Ovary (tissue), 10 donors: ENCODE measurements at regions of chr2 and their contacts with region 1.

Region 1: GRCh38 chr2:43219383-43220228 is 6.8 kb downstream of the ZFP36L2 start:
- DNase-seq: peak; percentile 80 to 88 (median 84)
- H3K4me3 ChIP-seq: peak overlapping the region; percentile 35
- H3K27ac ChIP-seq: peak overlapping the region; percentile 73 to 90
- H3K4me1 ChIP-seq: peaks cover 27% of the 10 kb centered on the region
- H3K27me3 ChIP-seq: no peaks in the 10 kb centered on the region
- CTCF ChIP-seq: no peak
- EP300 ChIP-seq: no peak
- POLR2A ChIP-seq: peak; percentile 31

Region 2: GRCh38 chr2:42964439-42965083 is 255.0 kb before region 1 on chr2:
- intact Hi-C with region 1: loop called in 1 of 4 experiments (anchors 5 kb)
- DNase-seq: peak; percentile 71 to 80 (median 78)
- H3K4me3 ChIP-seq: no peak overlapping the region
- H3K27ac ChIP-seq: peak overlapping the region in 1 of 2 donors; percentile 94
- H3K4me1 ChIP-seq: peaks cover 51% of the 10 kb centered on the region
- H3K27me3 ChIP-seq: no peaks in the 10 kb centered on the region
- CTCF ChIP-seq: no peak
- EP300 ChIP-seq: no peak
- POLR2A ChIP-seq: no peak

Region 3: DNA sequence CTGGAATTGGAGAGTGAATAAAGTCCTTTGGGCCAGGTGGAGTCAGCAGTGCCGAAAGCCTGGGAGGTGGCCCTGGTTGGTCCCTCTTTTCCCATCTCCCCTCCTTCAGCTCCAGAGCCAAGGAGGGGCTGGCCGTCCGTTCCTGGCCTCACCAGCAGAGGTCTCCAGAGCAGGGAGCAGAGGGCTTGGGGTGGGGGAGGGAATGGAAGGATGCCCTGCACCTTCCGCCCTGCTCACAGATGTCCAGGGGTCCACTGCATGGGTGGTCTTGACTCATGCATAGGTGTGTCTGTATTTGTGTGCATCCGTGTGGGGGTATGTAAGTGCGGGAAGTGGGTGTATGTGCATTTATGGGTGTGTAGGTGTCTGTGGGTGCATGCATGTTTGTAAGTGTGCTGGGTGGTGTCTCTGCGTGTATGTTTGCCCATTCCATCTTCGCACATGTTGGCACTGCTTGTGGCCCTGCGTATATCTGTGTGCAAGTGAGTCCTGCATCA is 195.0 kb before region 1 on chr2:
- intact Hi-C with region 1: loop called in 3 of 4 experiments (anchors 5 kb)
- DNase-seq: peak; percentile 70 to 82 (median 80)
- H3K4me3 ChIP-seq: no peak overlapping the region
- H3K27ac ChIP-seq: peak overlapping the region; percentile 20 to 34
- H3K4me1 ChIP-seq: peaks cover 7% of the 10 kb centered on the region
- H3K27me3 ChIP-seq: no peaks in the 10 kb centered on the region
- CTCF ChIP-seq: peak; percentile 63 to 85 (median 78)
- EP300 ChIP-seq: no peak
- POLR2A ChIP-seq: no peak

Region 4: GRCh38 chr2:43086451-43087221 is 133.0 kb before region 1 on chr2:
- intact Hi-C with region 1: loop called in 3 of 4 experiments (anchors 5 to 10 kb)
- DNase-seq: peak; percentile 61 to 84 (median 74)
- H3K4me3 ChIP-seq: no peak overlapping the region
- H3K27ac ChIP-seq: peak overlapping the region; percentile 61 to 76
- H3K4me1 ChIP-seq: peaks cover 31% of the 10 kb centered on the region
- H3K27me3 ChIP-seq: no peaks in the 10 kb centered on the region
- CTCF ChIP-seq: no peak
- EP300 ChIP-seq: peak; percentile 77
- POLR2A ChIP-seq: peak; percentile 21

Region 5: GRCh38 chr2:43178602-43179542 is 40.7 kb before region 1 on chr2:
- intact Hi-C with region 1: loop called in 1 of 4 experiments (anchors 5 kb)
- DNase-seq: peak; percentile 86 to 93 (median 89)
- H3K4me3 ChIP-seq: no peak overlapping the region
- H3K27ac ChIP-seq: peak overlapping the region; percentile 69 to 89
- H3K4me1 ChIP-seq: peaks cover 8% of the 10 kb centered on the region
- H3K27me3 ChIP-seq: no peaks in the 10 kb centered on the region
- CTCF ChIP-seq: no peak
- EP300 ChIP-seq: no peak
- POLR2A ChIP-seq: peak; percentile 52

Region 6: DNA sequence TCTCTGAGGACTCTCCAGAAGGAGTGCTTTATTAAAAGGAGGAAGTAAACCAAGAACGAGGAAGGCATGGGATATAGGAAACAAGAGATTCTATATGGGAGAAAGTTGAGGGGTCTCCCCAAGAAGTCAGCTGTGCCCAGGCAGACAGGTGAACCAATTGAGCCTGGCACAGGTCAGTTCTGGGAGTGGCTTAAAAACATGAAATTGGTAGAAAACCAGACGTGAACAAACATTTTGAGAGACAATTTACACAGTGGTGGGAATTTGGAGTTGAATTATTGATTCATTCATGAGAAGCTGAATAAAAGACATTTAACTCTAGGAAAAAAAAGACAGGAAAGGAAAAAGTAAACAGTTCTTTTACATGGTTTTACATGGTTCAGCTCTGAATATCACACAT is 433.9 kb after region 1 on chr2:
- intact Hi-C with region 1: no loop called
- DNase-seq: no peak
- H3K4me3 ChIP-seq: no peak overlapping the region
- H3K27ac ChIP-seq: no peak overlapping the region
- H3K4me1 ChIP-seq: peaks cover 1% of the 10 kb centered on the region
- H3K27me3 ChIP-seq: no peaks in the 10 kb centered on the region
- CTCF ChIP-seq: no peak
- EP300 ChIP-seq: no peak
- POLR2A ChIP-seq: no peak